Endothelial cell of umbilical vein (primary cell): ENCODE measurements at regions of chr17 and their contacts with region 1.

Region 1: GRCh38 chr17:17681187-17681848 is at the start of gene RAI1:
- DNase-seq: peak; percentile 75
- H3K4me3 ChIP-seq: peak within 1 kb of the TSS; percentile 65 to 91 (median 69)
- H3K27ac ChIP-seq: peak within 1 kb of the TSS; percentile 79
- H3K4me1 ChIP-seq: peaks cover 34% of the 10 kb centered on the region
- H3K27me3 ChIP-seq: no peaks in the 10 kb centered on the region
- CTCF ChIP-seq: peak; percentile 51 to 79
- POLR2A ChIP-seq: no peak
- total RNA-seq, gene RAI1: 43.3 and 47.3 TPM in 2 replicates

Region 2: GRCh38 chr17:17694169-17695081 is 13.1 kb after region 1 on chr17:
- CTCF ChIA-PET with region 1: no interaction called
- POLR2A ChIA-PET with region 1: no interaction called
- dilution Hi-C with region 1: no loop called
- intact Hi-C with region 1: loop called (anchors 1 kb)
- DNase-seq: peak; percentile 83
- H3K4me3 ChIP-seq: peak overlapping the region; percentile 40 to 55 (median 48)
- H3K27ac ChIP-seq: peak overlapping the region; percentile 88
- H3K4me1 ChIP-seq: peaks cover 42% of the 10 kb centered on the region
- H3K27me3 ChIP-seq: no peaks in the 10 kb centered on the region
- CTCF ChIP-seq: no peak
- POLR2A ChIP-seq: peak; percentile 62

Region 3: GRCh38 chr17:17723354-17724261 is 42.3 kb after region 1 on chr17:
- CTCF ChIA-PET with region 1: no interaction called
- POLR2A ChIA-PET with region 1: no interaction called
- dilution Hi-C with region 1: no loop called
- intact Hi-C with region 1: loop called (anchors 1 kb)
- DNase-seq: peak; percentile 61
- H3K4me3 ChIP-seq: peak overlapping the region; percentile 41 to 57 (median 50)
- H3K27ac ChIP-seq: peak overlapping the region; percentile 79
- H3K4me1 ChIP-seq: peaks cover 34% of the 10 kb centered on the region
- H3K27me3 ChIP-seq: no peaks in the 10 kb centered on the region
- CTCF ChIP-seq: no peak
- POLR2A ChIP-seq: peak; percentile 12

Region 4: DNA sequence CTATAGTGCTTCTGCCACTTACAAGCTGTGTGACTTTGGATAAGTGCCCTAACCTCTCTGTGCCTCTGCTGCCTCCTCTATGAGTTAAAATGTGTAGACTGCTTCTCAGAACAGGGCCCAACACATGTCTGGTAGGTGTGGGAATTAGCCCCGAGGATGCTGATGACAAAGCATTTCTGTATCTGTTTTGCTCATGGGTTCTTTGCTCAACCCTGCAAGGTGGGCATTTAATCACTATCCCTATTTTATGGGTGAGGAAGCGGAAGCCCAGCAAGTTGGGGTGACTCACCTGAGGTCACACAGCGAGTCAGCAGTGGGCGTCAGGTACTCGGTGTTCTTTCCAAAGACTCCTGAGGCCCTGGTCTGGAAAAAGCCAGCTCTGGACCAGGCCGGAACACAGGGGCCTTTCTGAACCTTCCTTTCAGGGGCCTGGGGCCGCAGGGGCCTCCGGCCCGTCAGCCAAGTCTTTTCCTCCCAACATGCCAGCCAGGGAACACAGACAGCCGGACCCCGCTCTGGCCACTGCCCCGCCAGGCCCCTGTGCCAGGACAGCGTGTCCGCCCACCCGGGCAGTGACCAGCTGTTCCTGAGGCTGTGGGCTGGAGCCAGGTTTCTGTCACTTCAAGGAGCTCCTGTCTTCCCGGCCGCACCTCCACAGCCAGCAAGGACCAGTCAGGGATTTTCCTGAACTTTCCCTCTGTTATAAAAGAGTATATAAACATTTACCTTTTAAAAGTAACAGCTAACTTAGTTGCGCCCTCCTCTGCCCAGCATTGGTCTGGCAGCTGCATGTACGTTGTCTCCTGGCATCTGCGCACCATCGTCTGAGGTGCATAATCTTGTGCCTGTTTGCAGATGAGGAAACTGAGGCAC is 92.9 kb after region 1 on chr17:
- CTCF ChIA-PET with region 1: interaction called, 17 read pairs
- POLR2A ChIA-PET with region 1: no interaction called
- dilution Hi-C with region 1: no loop called
- intact Hi-C with region 1: no loop called
- DNase-seq: peak; percentile 58
- H3K4me3 ChIP-seq: no peak overlapping the region
- H3K27ac ChIP-seq: peak overlapping the region; percentile 4
- H3K4me1 ChIP-seq: peaks cover 5% of the 10 kb centered on the region
- H3K27me3 ChIP-seq: no peaks in the 10 kb centered on the region
- CTCF ChIP-seq: peak in 1 of 2 donors; percentile 29
- POLR2A ChIP-seq: no peak

Region 5: GRCh38 chr17:17812211-17813057 is 131.1 kb after region 1 on chr17:
- CTCF ChIA-PET with region 1: interaction called, 8 read pairs
- POLR2A ChIA-PET with region 1: no interaction called
- dilution Hi-C with region 1: no loop called
- intact Hi-C with region 1: loop called (anchors 1 kb)
- DNase-seq: peak; percentile 68
- H3K4me3 ChIP-seq: no peak overlapping the region
- H3K27ac ChIP-seq: no peak overlapping the region
- H3K4me1 ChIP-seq: peaks cover 3% of the 10 kb centered on the region
- H3K27me3 ChIP-seq: no peaks in the 10 kb centered on the region
- CTCF ChIP-seq: peak; percentile 95 to 96
- POLR2A ChIP-seq: no peak

Region 6: DNA sequence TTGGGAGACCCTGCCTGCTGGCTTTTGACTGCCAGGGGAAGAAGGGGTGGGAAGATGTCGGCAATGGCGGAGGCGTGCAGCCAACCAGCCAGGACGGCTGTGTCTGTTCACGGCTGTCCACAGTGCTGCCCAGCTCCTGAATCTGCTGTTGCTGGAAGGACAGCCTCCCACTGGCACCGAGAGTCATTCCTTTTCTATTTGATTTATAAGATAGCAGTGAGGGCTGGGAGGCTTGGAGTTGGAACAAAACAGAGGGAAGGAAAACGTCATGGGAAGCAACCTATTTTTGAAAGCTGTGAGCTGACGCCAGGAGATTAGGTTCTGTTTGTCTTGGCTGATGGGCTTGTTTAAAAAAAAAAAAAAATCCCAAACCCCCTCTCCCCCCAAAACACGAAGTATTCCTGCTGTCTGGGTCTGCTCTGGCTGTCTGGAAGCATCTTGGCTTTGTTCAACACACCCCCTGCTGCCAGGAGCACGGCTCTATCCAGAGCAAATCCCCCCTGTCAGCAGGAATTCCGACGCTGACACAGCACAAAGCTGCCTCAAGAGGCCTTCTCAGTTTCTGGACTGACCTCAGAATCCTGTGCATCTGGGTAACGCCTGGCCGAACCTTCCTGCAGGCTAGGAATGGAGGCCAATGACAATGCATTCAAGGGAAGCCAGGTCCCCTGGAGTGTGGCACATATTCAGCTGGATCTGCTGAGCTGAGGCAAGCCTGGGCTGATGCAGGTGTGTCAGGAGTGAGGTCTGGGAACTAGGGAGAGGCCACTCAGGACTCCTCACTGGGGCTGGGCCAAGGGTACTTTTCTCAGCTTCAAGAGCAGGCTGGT is 196.4 kb after region 1 on chr17:
- CTCF ChIA-PET with region 1: no interaction called
- POLR2A ChIA-PET with region 1: no interaction called
- dilution Hi-C with region 1: no loop called
- intact Hi-C with region 1: loop called (anchors 5 kb)
- DNase-seq: peak; percentile 98
- H3K4me3 ChIP-seq: peak overlapping the region in 1 of 3 experiments; percentile 4
- H3K27ac ChIP-seq: peak overlapping the region; percentile 81
- H3K4me1 ChIP-seq: peaks cover 29% of the 10 kb centered on the region
- H3K27me3 ChIP-seq: no peaks in the 10 kb centered on the region
- CTCF ChIP-seq: peak in 1 of 2 donors; percentile 23
- POLR2A ChIP-seq: peak; percentile 20